Right ventricle myocardium superior (tissue), 1 donor: ENCODE measurements at regions of chr1 and their contacts with region 1.

Region 1: GRCh38 chr1:31394628-31395193 is 18.3 kb upstream of the SERINC2 start:
- DNase-seq: peak; percentile 90
- ATAC-seq: peak; percentile 95

Region 2: GRCh38 chr1:31548907-31549808 is 154.4 kb after region 1 on chr1:
- intact Hi-C with region 1: loop called (anchors 10 kb)
- DNase-seq: peak; percentile 81
- ATAC-seq: peak; percentile 97